ENCODE measurements at regions of chr14 and their contacts with region 1.

Region 1: GRCh38 chr14:31510222-31510621 is 22.4 kb upstream of the GPR33 start:
- DNase-seq: peak in 2 of 9 experiments; percentile 17 to 34
- ATAC-seq: no peak
- H3K4me3 ChIP-seq: no peak overlapping the region
- H3K4me3 Mint-ChIP-seq: no peak overlapping the region
- H3K27ac ChIP-seq: no peak overlapping the region
- H3K27ac Mint-ChIP-seq: no peak overlapping the region
- H3K4me1 ChIP-seq: no peaks in the 10 kb centered on the region
- H3K4me1 Mint-ChIP-seq: no peaks in the 10 kb centered on the region
- H3K27me3 ChIP-seq: no peaks in the 10 kb centered on the region
- H3K27me3 Mint-ChIP-seq: no peaks in the 10 kb centered on the region
- CTCF ChIP-seq: peak; percentile 77

Region 2: GRCh38 chr14:31592631-31593030 is 82.4 kb after region 1 on chr14:
- CTCF ChIA-PET with region 1: no interaction called
- POLR2A ChIA-PET with region 1: no interaction called
- intact Hi-C with region 1: no loop called
- DNase-seq: no peak
- ATAC-seq: no peak
- H3K4me3 ChIP-seq: no peak overlapping the region
- H3K4me3 Mint-ChIP-seq: no peak overlapping the region
- H3K27ac ChIP-seq: no peak overlapping the region
- H3K27ac Mint-ChIP-seq: no peak overlapping the region
- H3K4me1 ChIP-seq: no peaks in the 10 kb centered on the region
- H3K4me1 Mint-ChIP-seq: no peaks in the 10 kb centered on the region
- H3K27me3 ChIP-seq: no peaks in the 10 kb centered on the region
- H3K27me3 Mint-ChIP-seq: no peaks in the 10 kb centered on the region
- CTCF ChIP-seq: no peak

Region 3: GRCh38 chr14:32252030-32252670 is 741.9 kb after region 1 on chr14:
- CTCF ChIA-PET with region 1: interaction called, 18 read pairs
- POLR2A ChIA-PET with region 1: no interaction called
- intact Hi-C with region 1: loop called (anchors 1 to 2 kb)
- DNase-seq: peak in 8 of 9 experiments; percentile 3 to 78 (median 46)
- ATAC-seq: peak; percentile 90
- H3K4me3 ChIP-seq: no peak overlapping the region
- H3K4me3 Mint-ChIP-seq: no peak overlapping the region
- H3K27ac ChIP-seq: no peak overlapping the region
- H3K27ac Mint-ChIP-seq: no peak overlapping the region
- H3K4me1 ChIP-seq: no peaks in the 10 kb centered on the region
- H3K4me1 Mint-ChIP-seq: no peaks in the 10 kb centered on the region
- H3K27me3 ChIP-seq: no peaks in the 10 kb centered on the region
- H3K27me3 Mint-ChIP-seq: no peaks in the 10 kb centered on the region
- CTCF ChIP-seq: peak; percentile 87

Region 4: GRCh38 chr14:32560209-32560857 is 1050.1 kb after region 1 on chr14:
- CTCF ChIA-PET with region 1: no interaction called
- POLR2A ChIA-PET with region 1: no interaction called
- intact Hi-C with region 1: loop called in 1 of 2 experiments (anchors 5 kb)
- DNase-seq: peak in 3 of 9 experiments; percentile 0 to 37 (median 18)
- ATAC-seq: no peak
- H3K4me3 ChIP-seq: no peak overlapping the region
- H3K4me3 Mint-ChIP-seq: no peak overlapping the region
- H3K27ac ChIP-seq: no peak overlapping the region
- H3K27ac Mint-ChIP-seq: no peak overlapping the region
- H3K4me1 ChIP-seq: no peaks in the 10 kb centered on the region
- H3K4me1 Mint-ChIP-seq: peaks cover 12% of the 10 kb centered on the region
- H3K27me3 ChIP-seq: no peaks in the 10 kb centered on the region
- H3K27me3 Mint-ChIP-seq: no peaks in the 10 kb centered on the region
- CTCF ChIP-seq: peak; percentile 50

Measured in CD8-positive, alpha-beta T cell (primary cell).